Right cardiac atrium (tissue), 5 donors: ENCODE measurements at regions of chr15 and their contacts with region 1.

Region 1: GRCh38 chr15:45714590-45715488 is 80.0 kb downstream of the SQOR start:
- DNase-seq: peak; percentile 47 to 77 (median 63)
- ATAC-seq: peak; percentile 77 to 83
- H3K4me3 ChIP-seq: no peak overlapping the region
- H3K27ac ChIP-seq: no peak overlapping the region
- H3K4me1 ChIP-seq: no peaks in the 10 kb centered on the region
- H3K27me3 ChIP-seq: no peaks in the 10 kb centered on the region

Region 2: DNA sequence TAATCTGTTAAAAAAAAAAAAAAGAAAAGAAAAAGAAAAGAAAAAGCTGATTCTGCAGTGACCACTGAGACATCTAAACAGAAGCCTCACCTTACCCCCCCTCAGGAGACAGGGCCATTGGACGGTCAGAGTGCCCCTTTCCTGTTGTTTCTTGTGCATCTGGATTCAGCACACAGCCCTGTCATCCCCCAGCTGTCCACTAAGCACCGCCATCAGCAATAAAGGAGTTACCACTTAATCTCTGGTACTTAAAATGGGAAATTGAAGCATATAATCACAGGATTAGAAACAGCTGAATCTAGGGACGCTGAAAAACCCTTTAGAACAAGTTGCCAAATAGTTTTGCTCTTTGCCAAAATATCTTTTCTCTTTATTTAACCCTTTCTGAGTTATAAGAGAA is 916.0 kb before region 1 on chr15:
- intact Hi-C with region 1: no loop called
- DNase-seq: no peak
- ATAC-seq: peak in 1 of 2 donors; percentile 47
- H3K4me3 ChIP-seq: no peak overlapping the region
- H3K27ac ChIP-seq: no peak overlapping the region
- H3K4me1 ChIP-seq: no peaks in the 10 kb centered on the region
- H3K27me3 ChIP-seq: no peaks in the 10 kb centered on the region

Region 3: DNA sequence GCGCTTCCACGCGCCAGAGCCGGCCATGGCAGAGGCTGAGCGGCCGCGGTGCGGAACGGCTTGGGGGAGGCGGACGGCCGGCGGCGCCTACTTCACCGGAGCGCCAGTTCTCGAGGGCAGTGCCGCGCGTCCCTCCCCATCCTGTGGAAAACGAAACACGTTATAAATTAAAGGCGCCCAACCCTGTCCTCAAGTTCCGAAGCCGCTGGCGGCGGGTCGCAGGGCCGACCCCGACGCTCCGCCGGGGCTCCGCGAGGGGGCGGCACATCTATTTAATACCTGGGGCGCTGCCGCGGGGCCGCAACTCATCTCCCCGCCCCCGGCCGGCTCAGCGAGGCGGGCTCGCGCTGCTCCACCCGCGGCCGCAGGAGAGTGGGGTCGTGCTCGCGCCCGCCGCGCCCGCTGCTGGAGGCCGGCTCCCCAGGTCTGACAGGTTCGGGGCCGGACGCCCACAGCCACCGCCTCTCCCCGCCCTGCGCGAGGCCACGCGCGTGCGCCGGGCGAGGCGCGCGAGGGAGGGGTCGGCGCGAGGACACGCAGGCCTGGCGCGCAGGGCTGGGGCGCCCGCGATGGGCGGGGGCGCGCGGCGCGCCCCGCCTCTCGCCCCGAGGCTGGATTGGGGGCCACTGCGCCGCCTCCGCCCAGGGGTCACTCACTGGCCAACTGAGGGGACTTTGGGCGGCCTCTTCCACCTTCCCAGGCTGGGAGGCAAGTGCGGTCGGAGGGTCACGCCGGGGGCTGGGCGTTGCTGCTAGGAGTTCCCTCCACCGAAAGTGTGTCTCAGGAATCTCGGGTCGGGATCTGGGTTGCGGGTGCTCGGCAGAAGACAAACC is 192.3 kb before region 1 on chr15 and contains the start of gene SLC30A4:
- intact Hi-C with region 1: no loop called
- DNase-seq: peak; percentile 79 to 92 (median 91)
- ATAC-seq: peak; percentile 98
- H3K4me3 ChIP-seq: peak within 1 kb of the TSS; percentile 92
- H3K27ac ChIP-seq: peak within 1 kb of the TSS; percentile 85
- H3K4me1 ChIP-seq: peaks cover 2% of the 10 kb centered on the region
- H3K27me3 ChIP-seq: no peaks in the 10 kb centered on the region
- total RNA-seq, gene SLC30A4: 4.6 to 5.6 (median 5.3) TPM

Region 4: GRCh38 chr15:45555934-45556608 is 158.8 kb before region 1 on chr15:
- intact Hi-C with region 1: no loop called
- DNase-seq: no peak
- ATAC-seq: no peak
- H3K4me3 ChIP-seq: no peak overlapping the region
- H3K27ac ChIP-seq: no peak overlapping the region
- H3K4me1 ChIP-seq: no peaks in the 10 kb centered on the region
- H3K27me3 ChIP-seq: no peaks in the 10 kb centered on the region

Region 5: DNA sequence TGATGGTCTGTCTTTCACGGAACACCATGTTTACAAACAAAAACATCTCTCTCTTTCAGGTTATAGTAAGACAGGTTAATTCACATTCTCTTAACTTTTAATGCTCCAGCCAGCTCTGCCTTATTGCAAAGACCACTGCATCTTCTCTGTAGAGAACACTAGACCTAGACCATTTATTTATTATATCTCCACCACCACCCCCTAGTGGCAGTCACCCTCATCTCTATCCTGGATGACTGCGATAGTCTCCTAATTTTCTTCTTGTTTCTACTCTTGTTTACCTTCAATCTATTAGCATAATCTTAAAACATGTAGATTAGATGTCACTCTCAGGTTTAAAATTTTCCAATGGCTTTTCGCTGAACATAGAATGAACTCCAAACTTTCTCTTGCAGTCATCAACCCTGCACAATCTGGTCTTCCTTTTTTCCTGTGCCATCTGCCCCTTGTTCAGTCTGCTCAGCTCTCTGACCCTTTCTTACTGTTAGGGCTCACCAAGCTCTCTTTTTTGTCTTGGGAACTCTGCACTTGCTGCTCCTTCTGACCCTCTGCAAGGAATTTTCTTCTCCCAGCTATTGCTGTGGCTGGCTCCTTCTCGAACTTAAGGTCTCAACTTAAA is 75.6 kb after region 1 on chr15:
- intact Hi-C with region 1: loop called in 3 of 4 experiments (anchors 2 to 5 kb)
- DNase-seq: peak in 1 of 3 donors; percentile 15
- ATAC-seq: peak; percentile 43 to 56
- H3K4me3 ChIP-seq: no peak overlapping the region
- H3K27ac ChIP-seq: no peak overlapping the region
- H3K4me1 ChIP-seq: no peaks in the 10 kb centered on the region
- H3K27me3 ChIP-seq: peaks cover 3% of the 10 kb centered on the region

Region 6: DNA sequence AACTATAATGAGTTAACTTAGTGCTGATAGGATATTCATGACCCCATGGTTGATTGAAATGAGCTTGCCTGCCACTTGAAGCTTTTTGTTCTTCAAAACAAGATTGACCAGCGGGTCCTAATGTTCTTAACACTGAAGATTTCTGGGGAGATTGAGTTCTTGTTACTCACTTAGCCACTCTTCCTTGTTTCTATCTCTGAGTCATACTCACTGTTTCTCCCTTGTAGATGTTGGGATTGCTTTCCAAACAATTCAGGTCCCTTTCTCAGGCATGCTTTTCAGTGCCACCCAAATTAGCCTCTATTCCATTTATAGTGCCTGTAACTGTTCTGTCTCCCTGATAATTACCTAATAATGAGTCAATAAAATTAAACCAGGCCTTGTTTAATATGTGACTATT is 436.9 kb after region 1 on chr15:
- intact Hi-C with region 1: loop called in 1 of 4 experiments (anchors 10 kb)
- DNase-seq: no peak
- ATAC-seq: no peak
- H3K4me3 ChIP-seq: no peak overlapping the region
- H3K27ac ChIP-seq: no peak overlapping the region
- H3K4me1 ChIP-seq: no peaks in the 10 kb centered on the region
- H3K27me3 ChIP-seq: no peaks in the 10 kb centered on the region